Activated CD4-positive, alpha-beta T cell treated with anti-CD3 and anti-CD28 coated beads for 36 hours (primary cell): ENCODE measurements at regions of chr15 and their contacts with region 1.

Region 1: GRCh38 chr15:75201609-75202250 is at the start of gene C15orf39:
- DNase-seq: peak; percentile 87
- ATAC-seq: peak; percentile 57
- H3K4me3 Mint-ChIP-seq: peak within 1 kb of the TSS; percentile 86
- H3K27ac Mint-ChIP-seq: peak within 1 kb of the TSS; percentile 89
- H3K4me1 Mint-ChIP-seq: peaks cover 34% of the 10 kb centered on the region
- H3K27me3 Mint-ChIP-seq: no peaks in the 10 kb centered on the region
- total RNA-seq, gene C15orf39: 18.6 to 25.1 TPM

Region 2: DNA sequence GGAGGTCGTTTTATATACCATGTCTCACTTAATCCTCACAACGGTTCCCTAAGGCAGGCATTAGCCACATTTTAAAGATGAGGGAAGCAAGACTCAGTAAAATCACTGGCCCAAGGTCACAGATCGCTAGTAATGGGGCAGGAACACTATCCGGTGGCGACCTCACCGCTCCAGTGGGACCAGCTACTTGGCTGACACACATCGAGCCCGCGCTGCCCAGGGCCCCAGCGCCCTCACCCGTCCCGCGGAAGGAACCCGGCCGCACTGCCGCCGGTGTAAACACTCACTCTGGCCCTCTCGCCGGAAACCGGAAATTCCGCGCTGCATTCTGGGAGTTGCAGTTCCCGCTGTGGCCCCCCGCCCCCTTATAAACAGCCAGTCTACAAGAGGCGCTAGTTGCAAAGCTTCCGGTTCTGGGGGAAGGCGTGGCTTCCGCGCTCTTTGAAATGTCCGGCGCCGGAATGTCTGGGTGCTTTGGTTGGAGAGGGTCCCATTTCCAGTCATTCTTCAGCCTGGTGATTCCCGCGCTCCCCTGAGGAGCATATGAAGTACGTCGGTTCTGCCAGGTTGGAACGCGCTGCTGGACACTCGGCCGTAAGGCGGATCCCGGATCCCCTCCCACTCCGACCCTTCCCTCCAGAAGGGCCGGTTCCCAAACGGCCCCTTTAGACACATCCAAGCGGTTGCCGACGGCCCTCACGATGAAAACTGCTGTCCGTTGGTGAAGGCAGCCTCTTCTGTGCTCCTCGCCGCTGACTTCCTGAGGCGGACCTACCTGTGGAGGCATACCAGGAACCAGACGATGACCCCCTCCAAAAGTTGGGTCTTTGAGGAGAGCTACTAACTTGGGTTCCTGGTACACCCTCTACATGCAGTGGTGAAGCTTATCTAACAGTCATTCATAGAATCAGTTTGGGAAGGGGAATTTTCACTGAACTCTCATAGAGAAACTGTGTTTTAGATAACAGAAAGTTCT is 740.6 kb before region 1 on chr15 and contains the start of gene UBL7:
- CTCF ChIA-PET with region 1: no interaction called
- POLR2A ChIA-PET with region 1: no interaction called
- intact Hi-C with region 1: loop called in 1 of 2 experiments (anchors 2 kb)
- DNase-seq: peak; percentile 99
- ATAC-seq: peak; percentile 97
- H3K4me3 Mint-ChIP-seq: peak within 1 kb of the TSS; percentile 96
- H3K27ac Mint-ChIP-seq: peak within 1 kb of the TSS; percentile 97
- H3K4me1 Mint-ChIP-seq: peaks cover 47% of the 10 kb centered on the region
- H3K27me3 Mint-ChIP-seq: no peaks in the 10 kb centered on the region
- total RNA-seq, gene UBL7: 47.5 to 48.6 TPM

Region 3: GRCh38 chr15:74842581-74843444 is 358.9 kb before region 1 on chr15 and contains the start of gene ULK3:
- CTCF ChIA-PET with region 1: interaction called, 4 read pairs
- POLR2A ChIA-PET with region 1: no interaction called
- intact Hi-C with region 1: loop called in 1 of 2 experiments (anchors 2 kb)
- DNase-seq: peak; percentile 97
- ATAC-seq: peak; percentile 85
- H3K4me3 Mint-ChIP-seq: peak within 1 kb of the TSS; percentile 90
- H3K27ac Mint-ChIP-seq: peak within 1 kb of the TSS; percentile 90
- H3K4me1 Mint-ChIP-seq: peaks cover 45% of the 10 kb centered on the region
- H3K27me3 Mint-ChIP-seq: no peaks in the 10 kb centered on the region
- total RNA-seq, gene ULK3: 40.3 to 45.2 TPM

Region 4: DNA sequence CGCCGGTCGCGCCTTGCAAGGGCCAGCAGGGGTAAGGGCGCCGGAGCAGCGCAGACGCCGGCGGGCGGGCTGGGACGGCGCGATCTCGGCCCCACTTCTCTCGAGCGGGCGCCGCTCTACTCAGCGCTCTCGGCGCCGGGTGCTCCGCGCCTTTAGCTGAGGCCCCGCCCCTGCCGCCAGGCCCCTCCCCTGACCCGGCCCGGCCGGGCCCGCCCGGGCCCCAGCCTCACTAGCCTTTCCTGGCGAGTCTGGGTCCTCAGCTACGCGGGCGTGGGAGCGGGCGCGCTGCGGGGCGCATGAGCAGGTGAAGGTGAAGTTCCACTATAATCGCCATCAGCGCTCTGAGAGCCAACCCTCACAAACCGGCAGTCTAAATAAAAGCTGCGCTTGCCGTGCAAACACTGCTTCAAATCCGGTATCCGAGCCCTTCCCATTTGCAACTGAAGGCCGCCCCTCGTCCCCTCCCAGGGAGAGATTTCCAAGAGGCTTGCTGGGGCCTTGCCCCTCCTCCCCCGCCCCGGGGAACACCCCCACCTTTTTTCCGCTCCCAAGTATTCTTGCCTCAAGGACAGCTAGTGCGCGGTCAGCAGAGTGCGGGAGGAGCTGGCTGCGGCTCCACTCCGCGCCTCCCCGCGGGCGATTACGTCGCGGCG is 245.0 kb before region 1 on chr15 and contains the start of gene RPP25:
- CTCF ChIA-PET with region 1: interaction called, 3 read pairs
- POLR2A ChIA-PET with region 1: no interaction called
- intact Hi-C with region 1: loop called (anchors 1 to 2 kb)
- DNase-seq: peak; percentile 85
- ATAC-seq: peak; percentile 84
- H3K4me3 Mint-ChIP-seq: peak within 1 kb of the TSS; percentile 65
- H3K27ac Mint-ChIP-seq: no peak within 1 kb of the TSS
- H3K4me1 Mint-ChIP-seq: peaks cover 46% of the 10 kb centered on the region
- H3K27me3 Mint-ChIP-seq: peaks cover 25% of the 10 kb centered on the region
- total RNA-seq, gene RPP25: 5.4 to 6.2 TPM

Region 5: GRCh38 chr15:75023181-75023871 is 178.4 kb before region 1 on chr15 and contains the start of gene PPCDC:
- CTCF ChIA-PET with region 1: interaction called, 64 read pairs
- POLR2A ChIA-PET with region 1: interaction called, 7 read pairs
- intact Hi-C with region 1: loop called in 1 of 2 experiments (anchors 1 kb)
- DNase-seq: peak; percentile 97
- ATAC-seq: peak; percentile 100
- H3K4me3 Mint-ChIP-seq: peak within 1 kb of the TSS; percentile 89
- H3K27ac Mint-ChIP-seq: peak within 1 kb of the TSS; percentile 95
- H3K4me1 Mint-ChIP-seq: peaks cover 13% of the 10 kb centered on the region
- H3K27me3 Mint-ChIP-seq: no peaks in the 10 kb centered on the region
- total RNA-seq, gene PPCDC: 23.3 to 24.0 TPM

Region 6: DNA sequence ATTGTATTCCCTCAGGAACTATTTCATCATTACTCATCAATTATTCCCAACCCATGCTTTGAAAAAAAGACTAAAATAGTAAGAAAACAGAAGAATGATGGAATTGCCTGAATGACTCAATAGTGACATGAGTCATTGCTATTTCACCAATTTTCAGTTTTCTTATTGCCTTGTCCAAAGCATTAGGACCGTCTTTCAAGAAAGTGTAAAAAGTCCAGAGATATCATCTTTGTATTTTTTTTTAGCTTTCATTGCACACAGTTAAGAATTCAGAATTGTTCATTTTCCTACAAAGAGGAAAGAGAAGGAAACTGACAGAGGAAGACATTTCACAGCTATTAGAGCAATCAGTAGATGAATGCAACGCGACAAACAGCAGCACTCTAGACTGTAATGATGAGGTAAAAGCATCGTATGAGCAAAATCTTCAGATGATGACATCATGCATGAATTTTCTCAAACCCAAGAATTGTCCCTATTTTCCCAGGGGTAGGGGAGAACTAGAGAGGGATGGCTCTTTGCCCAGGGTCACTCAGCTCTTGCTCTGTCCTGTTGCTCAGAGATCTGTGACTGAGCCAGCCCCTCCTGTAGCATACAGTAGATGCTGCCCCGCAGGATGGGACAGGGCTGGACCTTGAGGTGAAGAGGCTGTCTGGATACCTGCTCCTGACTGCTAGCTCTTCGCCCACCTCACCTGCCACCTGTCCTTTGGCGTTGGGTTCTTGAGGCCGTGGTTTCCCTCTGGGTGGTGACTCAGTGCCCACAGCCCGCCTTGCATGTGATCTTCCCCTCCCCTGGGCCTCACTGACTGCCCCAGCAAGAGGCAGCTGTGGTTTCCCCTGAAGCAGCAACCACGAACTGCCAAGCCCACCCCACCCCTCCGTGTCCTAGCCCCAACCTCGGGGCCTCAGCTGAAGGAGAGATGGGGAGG is 93.6 kb before region 1 on chr15:
- CTCF ChIA-PET with region 1: interaction called, 5 read pairs
- POLR2A ChIA-PET with region 1: no interaction called
- intact Hi-C with region 1: loop called in 1 of 2 experiments (anchors 1 kb)
- DNase-seq: peak; percentile 81
- ATAC-seq: peak; percentile 81
- H3K4me3 Mint-ChIP-seq: no peak overlapping the region
- H3K27ac Mint-ChIP-seq: no peak overlapping the region
- H3K4me1 Mint-ChIP-seq: peaks cover 28% of the 10 kb centered on the region
- H3K27me3 Mint-ChIP-seq: peaks cover 27% of the 10 kb centered on the region

Region 7: GRCh38 chr15:75903331-75904239 is 701.9 kb after region 1 on chr15 and contains the start of gene FBXO22:
- CTCF ChIA-PET with region 1: no interaction called
- POLR2A ChIA-PET with region 1: no interaction called
- intact Hi-C with region 1: loop called in 1 of 2 experiments (anchors 5 kb)
- DNase-seq: peak; percentile 97
- ATAC-seq: peak; percentile 97
- H3K4me3 Mint-ChIP-seq: peak within 1 kb of the TSS; percentile 97
- H3K27ac Mint-ChIP-seq: peak within 1 kb of the TSS; percentile 98
- H3K4me1 Mint-ChIP-seq: peaks cover 40% of the 10 kb centered on the region
- H3K27me3 Mint-ChIP-seq: no peaks in the 10 kb centered on the region
- total RNA-seq, gene FBXO22: 51.4 to 59.2 TPM